ENCODE measurements at regions of chr22 and their contacts with region 1.

Region 1: DNA sequence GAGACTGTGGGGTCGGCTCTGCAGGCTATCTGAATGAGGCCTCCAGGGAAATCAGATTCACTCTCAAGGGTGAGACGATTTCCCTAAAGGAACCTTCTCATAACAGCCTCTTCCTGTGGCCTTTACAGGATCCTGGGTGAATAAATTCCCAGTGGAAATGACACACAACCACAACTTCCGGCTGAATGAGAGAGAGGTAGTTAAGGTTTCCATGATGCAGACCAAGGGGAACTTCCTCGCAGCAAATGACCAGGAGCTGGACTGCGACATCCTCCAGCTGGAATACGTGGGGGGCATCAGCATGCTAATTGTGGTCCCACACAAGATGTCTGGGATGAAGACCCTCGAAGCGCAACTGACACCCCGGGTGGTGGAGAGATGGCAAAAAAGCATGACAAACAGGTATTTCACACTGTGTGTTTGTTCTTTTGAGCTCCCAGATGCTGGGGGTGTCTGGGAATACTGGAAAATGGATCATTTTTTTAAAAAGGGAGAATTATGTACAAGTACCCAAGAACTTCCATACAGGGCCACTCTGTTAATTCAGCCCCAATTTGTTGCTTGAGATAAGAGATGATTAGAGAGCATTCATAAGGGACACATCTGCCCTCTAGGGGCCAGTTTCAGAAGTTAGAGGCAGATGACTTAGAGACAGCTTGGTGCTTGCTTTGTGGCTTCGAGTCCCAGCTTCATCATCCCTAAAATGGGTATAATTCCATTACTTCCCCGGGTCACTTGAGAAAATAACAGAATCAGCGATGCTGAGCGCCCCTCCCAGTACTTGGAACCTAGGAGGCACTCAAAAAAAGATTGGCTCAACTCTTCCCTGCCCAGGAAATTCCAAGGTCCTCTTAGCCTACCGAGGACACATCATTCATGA is 10.2 kb downstream of the SERPIND1 start:
- DNase-seq: no peak
- H3K4me3 ChIP-seq: no peak overlapping the region
- H3K27me3 ChIP-seq: no peaks in the 10 kb centered on the region
- CTCF ChIP-seq: peak; percentile 83

Region 2: GRCh38 chr22:20771918-20772625 is 12.0 kb before region 1 on chr22:
- CTCF ChIA-PET with region 1: interaction called, 16 read pairs
- POLR2A ChIA-PET with region 1: no interaction called
- DNase-seq: no peak
- H3K4me3 ChIP-seq: no peak overlapping the region
- H3K27me3 ChIP-seq: no peaks in the 10 kb centered on the region
- CTCF ChIP-seq: 0 out of 2 replicates have a peak, but pooled peaks have one; percentile 7

Region 3: GRCh38 chr22:20803696-20804324 is 19.7 kb after region 1 on chr22:
- CTCF ChIA-PET with region 1: interaction called, 12 read pairs
- POLR2A ChIA-PET with region 1: no interaction called
- DNase-seq: no peak
- H3K4me3 ChIP-seq: no peak overlapping the region
- H3K27me3 ChIP-seq: no peaks in the 10 kb centered on the region
- CTCF ChIP-seq: peak; percentile 73

Measured in BJ (cell line).